ENCODE measurements at regions of chr1 and their contacts with region 1.

Region 1: DNA sequence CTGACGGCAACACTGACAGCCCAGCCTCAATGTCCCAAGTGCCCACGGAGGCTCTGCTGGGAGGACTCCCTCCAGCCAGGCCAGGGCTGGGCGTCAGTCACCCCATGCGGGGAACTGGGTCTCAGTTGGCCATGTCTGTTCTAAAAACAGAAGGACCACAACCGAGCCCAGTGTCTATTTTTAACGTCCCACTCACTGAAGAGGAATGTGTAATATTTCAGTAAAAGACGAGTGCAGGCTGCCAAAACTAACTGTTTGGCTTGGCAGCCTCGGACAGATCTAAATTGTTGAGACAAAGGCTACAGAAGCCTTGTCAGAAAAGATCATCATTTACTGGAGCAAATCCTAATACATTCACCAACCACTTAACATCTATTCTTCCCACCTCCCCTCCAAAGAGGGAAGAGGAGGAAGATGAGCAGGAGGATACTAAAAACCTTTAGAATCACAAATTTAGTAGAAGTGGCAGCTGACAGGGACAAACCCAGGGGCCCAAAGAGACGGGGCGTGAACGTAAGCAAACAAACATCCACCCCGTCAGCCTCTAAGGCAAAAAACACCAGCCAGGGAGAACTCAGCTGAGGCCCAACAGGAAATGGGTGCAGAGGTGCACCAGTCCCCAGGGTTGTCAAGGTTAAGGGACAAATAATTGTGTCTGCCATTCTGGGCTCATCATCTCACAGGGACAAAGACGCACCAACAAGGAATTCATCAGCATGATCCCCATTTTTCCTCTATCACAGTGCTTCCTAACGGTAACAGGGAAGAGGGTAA is 18.7 kb downstream of the C1orf198 start:
- DNase-seq: no peak
- H3K4me3 ChIP-seq: peak overlapping the region in 1 of 4 donors; percentile 3
- H3K27ac ChIP-seq: peak overlapping the region; percentile 66 to 78 (median 74)
- H3K4me1 ChIP-seq: peaks cover 42 to 70% (median 53%) of the 10 kb centered on the region in 4 donors
- H3K27me3 ChIP-seq: no peaks in the 10 kb centered on the region
- CTCF ChIP-seq: no peak
- EP300 ChIP-seq: no peak
- POLR2A ChIP-seq: no peak

Region 2: DNA sequence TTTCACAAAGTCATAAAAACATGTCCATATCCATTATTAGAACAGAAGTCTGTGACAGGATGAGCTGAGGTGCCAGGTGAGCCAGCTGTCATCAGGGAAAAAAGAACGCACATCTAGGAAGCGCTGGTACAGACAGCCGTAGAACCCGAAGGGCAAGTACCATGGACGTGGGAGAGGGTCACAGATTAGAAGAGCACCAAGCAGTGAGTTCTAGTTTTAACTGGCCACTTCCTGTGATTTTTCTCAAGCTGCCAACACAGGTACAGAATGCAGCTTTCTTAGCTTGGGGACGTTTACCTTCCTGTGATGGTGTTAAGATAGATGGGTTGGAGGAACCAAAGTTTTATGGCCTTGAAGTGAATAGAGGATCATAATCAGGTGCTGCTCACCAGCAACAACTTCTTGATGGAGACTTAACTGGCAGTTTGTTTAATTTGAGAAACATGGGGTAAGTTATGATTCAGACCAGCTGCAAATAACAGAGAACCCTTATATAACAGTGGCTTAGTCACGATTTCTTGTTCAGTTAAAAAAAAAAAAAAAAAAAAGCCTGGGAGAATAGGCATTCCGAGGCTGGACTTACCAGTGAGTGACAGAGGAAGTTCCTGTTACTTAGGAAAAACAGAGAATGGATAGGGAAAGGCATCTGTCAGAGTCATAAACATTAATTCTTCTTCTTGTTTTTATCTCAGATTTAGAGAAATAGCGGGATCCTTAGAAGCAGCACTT is 166.6 kb before region 1 on chr1:
- intact Hi-C with region 1: no loop called
- DNase-seq: no peak
- H3K4me3 ChIP-seq: no peak overlapping the region
- H3K27ac ChIP-seq: peak overlapping the region in 1 of 4 donors; percentile 22
- H3K4me1 ChIP-seq: peaks cover 12 to 23% (median 21%) of the 10 kb centered on the region in 4 donors
- H3K27me3 ChIP-seq: no peaks in the 10 kb centered on the region
- CTCF ChIP-seq: no peak
- EP300 ChIP-seq: no peak
- POLR2A ChIP-seq: no peak

Region 3: DNA sequence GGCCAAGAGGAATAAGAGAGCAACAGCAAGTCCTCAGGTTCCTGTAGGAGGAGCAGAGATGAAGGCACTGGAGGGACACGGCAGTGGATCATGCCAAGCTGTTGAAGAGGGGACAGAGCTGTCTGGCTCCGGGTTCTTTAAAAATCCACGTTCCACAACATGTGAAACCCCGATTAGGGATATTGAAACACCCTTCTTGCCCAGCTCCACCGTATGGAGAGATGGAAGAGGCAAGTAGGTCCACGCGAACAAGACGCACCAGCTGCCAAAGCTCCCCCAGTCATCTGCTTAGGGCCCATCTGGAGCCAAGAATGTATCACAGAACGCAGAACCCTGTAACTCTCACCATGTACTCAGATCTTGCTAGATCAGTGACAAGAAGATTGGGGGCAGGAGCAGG is 14.8 kb after region 1 on chr1:
- intact Hi-C with region 1: loop called (anchors 2 kb)
- DNase-seq: no peak
- H3K4me3 ChIP-seq: peak overlapping the region in 3 of 4 donors; percentile 16 to 100 (median 88)
- H3K27ac ChIP-seq: peak overlapping the region in 3 of 4 donors; percentile 86 to 97 (median 90)
- H3K4me1 ChIP-seq: peaks cover 57 to 83% (median 72%) of the 10 kb centered on the region in 4 donors
- H3K27me3 ChIP-seq: no peaks in the 10 kb centered on the region
- CTCF ChIP-seq: no peak
- EP300 ChIP-seq: no peak
- POLR2A ChIP-seq: no peak